IMR-90 (cell line): ENCODE measurements at regions of chr3 and their contacts with region 1.

Region 1: DNA sequence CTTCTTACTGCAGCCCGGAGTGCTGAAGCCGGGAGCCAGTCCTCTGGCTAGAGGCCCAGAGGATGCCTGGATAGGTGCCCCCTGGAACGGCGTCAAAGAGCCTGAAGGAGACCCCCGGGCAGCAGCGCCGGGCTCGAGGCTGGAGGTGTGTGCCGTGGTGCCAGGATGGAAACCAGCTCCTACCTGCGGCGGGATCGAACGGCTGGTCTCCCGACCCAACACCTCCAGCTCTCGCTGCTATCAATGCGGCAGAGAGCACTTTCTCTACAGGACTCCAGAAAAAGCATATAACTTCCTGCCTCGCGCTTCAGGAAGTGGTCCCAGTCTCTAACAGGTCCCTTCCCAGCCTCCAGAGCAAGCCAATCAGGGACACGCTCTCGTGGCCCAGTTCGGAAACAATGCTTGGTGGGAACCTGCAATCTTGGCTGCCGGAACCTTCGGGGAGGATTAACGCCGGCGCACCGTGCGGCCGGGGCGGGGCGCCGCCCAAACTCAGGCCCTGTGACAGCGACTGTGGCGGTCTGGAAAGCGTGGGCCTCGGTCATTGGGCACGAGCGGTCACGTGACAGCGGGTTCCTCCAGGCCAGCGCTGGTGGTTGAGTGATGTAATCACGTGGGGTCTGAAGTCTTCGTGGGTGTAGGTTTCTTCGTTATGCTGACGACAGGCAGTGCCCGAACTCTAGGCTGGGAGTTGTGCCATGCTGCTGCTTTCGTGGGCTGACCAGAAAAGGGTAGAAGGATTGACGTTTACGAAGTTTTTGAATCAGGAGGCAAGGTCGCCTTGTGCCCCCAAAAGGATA is at the start of gene SLC33A1:
- DNase-seq: peak; percentile 99
- ATAC-seq: peak; percentile 97
- H3K4me3 ChIP-seq: peak within 1 kb of the TSS; percentile 63
- H3K27ac ChIP-seq: peak within 1 kb of the TSS; percentile 79
- H3K4me1 ChIP-seq: no peaks in the 10 kb centered on the region
- H3K27me3 ChIP-seq: no peaks in the 10 kb centered on the region
- CTCF ChIP-seq: no peak
- POLR2A ChIP-seq: peak; percentile 80
- RAD21 ChIP-seq: no peak
- total RNA-seq, gene SLC33A1: 32.4 and 34.4 TPM in 2 replicates

Region 2: DNA sequence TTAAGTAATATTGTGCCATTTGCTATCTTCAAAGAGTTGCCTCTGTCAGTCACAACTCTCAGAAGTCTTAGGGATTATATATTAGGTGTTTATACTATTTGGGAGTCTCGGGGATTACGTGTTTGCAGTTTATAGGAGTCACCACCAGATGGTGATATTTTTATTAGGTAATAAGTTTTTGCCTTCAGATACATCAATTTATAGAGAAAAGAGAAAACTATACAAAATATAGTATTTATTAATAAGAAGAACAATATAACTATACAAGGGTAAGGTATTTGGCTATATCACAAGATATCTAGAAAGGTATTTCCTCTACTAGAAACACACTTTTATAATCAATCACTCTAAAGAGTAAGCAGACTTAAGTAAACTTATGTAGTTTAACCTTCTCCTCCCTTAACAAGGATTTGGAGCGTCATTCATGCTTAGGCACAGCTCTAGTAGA is 1519.3 kb before region 1 on chr3:
- CTCF ChIA-PET with region 1: no interaction called
- POLR2A ChIA-PET with region 1: no interaction called
- dilution Hi-C with region 1: no loop called
- in situ Hi-C with region 1: no loop called
- intact Hi-C with region 1: loop called (anchors 10 kb)
- DNase-seq: peak; percentile 53
- ATAC-seq: peak; percentile 69; the same call in 1 of the 2 replicates
- H3K4me3 ChIP-seq: no peak overlapping the region
- H3K27ac ChIP-seq: no peak overlapping the region
- H3K4me1 ChIP-seq: no peaks in the 10 kb centered on the region
- H3K27me3 ChIP-seq: peaks cover 2% of the 10 kb centered on the region; the same call in 1 of the 2 replicates
- CTCF ChIP-seq: peak; percentile 62
- POLR2A ChIP-seq: no peak
- RAD21 ChIP-seq: peak; percentile 37

Region 3: GRCh38 chr3:155753036-155753639 is 101.2 kb before region 1 on chr3:
- CTCF ChIA-PET with region 1: no interaction called
- POLR2A ChIA-PET with region 1: no interaction called
- dilution Hi-C with region 1: no loop called
- in situ Hi-C with region 1: no loop called
- intact Hi-C with region 1: loop called (anchors 2 kb)
- DNase-seq: peak; percentile 39
- ATAC-seq: peak; percentile 75
- H3K4me3 ChIP-seq: no peak overlapping the region
- H3K27ac ChIP-seq: no peak overlapping the region
- H3K4me1 ChIP-seq: no peaks in the 10 kb centered on the region
- H3K27me3 ChIP-seq: peaks cover 3% of the 10 kb centered on the region
- CTCF ChIP-seq: peak; percentile 52
- POLR2A ChIP-seq: no peak
- RAD21 ChIP-seq: peak; percentile 55

Region 4: GRCh38 chr3:155870133-155870944 is 16.0 kb after region 1 on chr3 and contains the start of gene GMPS:
- CTCF ChIA-PET with region 1: interaction called, 5 read pairs
- POLR2A ChIA-PET with region 1: no interaction called
- dilution Hi-C with region 1: no loop called
- in situ Hi-C with region 1: no loop called
- intact Hi-C with region 1: loop called (anchors 1 kb)
- DNase-seq: peak; percentile 89
- ATAC-seq: peak; percentile 96
- H3K4me3 ChIP-seq: peak within 1 kb of the TSS; percentile 98
- H3K27ac ChIP-seq: peak within 1 kb of the TSS; percentile 87
- H3K4me1 ChIP-seq: peaks cover 4% of the 10 kb centered on the region; the same call in 1 of the 2 replicates
- H3K27me3 ChIP-seq: no peaks in the 10 kb centered on the region
- CTCF ChIP-seq: peak; percentile 69
- POLR2A ChIP-seq: peak; percentile 80
- RAD21 ChIP-seq: peak; percentile 52
- total RNA-seq, gene GMPS: 52.5 and 108 TPM in 2 replicates

Region 5: DNA sequence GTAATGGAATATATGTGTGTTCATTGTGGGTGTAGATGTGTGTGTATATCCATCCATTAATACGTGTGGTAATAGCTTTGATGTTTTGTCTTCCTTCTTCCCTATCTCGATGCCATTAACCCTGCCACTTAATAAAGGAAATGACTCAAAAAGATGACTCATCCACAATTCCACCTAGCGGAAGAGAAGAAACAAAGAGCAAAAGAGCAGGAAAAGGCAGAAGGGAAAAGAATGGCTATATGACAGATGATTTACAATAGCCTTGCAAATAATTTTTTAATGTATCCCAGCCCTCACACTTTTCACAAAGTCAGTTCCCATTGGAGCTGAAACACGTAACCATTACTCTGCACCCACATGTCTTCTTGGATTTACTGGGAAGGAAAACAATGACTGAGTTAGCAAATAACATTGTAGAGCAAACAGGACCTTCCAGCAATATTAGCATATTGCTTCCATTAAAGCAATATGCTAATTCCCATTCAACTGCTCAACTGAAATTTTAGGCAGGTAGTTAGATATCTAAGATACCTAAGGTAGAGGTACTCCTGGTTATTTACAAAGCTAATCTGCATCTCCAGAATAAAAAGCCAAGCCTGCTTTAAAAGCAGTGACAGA is 463.2 kb after region 1 on chr3:
- CTCF ChIA-PET with region 1: no interaction called
- POLR2A ChIA-PET with region 1: no interaction called
- dilution Hi-C with region 1: no loop called
- in situ Hi-C with region 1: no loop called
- intact Hi-C with region 1: no loop called
- DNase-seq: peak; percentile 44
- ATAC-seq: no peak
- H3K4me3 ChIP-seq: no peak overlapping the region
- H3K27ac ChIP-seq: no peak overlapping the region
- H3K4me1 ChIP-seq: no peaks in the 10 kb centered on the region
- H3K27me3 ChIP-seq: peaks cover 2% of the 10 kb centered on the region; the same call in 1 of the 2 replicates
- CTCF ChIP-seq: no peak
- POLR2A ChIP-seq: no peak
- RAD21 ChIP-seq: no peak